A549 (cell line): ENCODE measurements at regions of chr14 and their contacts with region 1.

Region 1: DNA sequence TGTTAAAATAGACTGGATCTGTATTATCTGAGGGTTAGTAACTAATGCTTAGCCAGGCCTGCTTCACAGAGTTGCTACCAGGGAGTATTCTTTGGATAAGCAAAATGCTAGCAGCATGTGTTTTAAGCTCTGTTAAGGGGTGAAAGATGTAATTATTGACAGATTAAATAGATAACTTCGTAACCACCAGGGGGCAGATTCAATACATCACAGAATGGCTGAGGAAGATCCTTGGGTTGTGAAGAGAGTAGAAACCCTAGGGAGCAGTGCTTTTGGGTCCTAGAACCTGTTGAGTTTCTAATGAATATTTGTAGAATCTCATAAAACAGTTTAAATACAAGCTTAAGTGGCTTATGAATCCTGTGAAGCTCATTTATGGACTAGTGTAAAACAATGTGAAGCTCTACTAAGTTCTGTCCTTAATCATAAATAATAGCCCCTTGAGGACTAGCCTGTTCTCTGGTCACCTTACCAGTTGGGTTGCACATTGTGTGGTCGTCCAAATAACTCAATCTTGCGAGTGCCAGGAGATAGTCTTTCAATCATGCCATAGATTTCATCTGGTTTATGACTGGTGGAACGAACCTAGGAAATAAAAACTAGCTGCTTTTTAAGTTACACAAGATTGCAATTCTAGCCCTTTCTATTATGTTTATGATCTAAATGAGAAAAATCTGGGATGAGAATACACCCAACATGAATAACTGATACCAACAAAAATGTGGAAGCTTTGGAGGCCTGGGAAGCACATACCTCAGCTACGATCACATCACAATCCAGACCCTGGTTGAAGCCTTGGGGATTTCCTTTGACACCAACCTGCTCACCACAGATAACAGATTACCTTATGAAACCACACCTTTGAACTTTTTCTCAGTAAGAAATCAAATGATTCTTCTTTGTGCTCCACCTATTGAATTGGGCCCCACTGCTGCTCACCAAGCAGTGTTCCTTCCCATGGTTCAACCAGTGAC is 12.3 kb downstream of the METTL3 start:
- DNase-seq: peak; percentile 49 to 59
- ATAC-seq: peak; percentile 86 to 87
- H3K4me3 ChIP-seq: no peak overlapping the region
- H3K27ac ChIP-seq: no peak overlapping the region
- H3K4me1 ChIP-seq: peaks cover 8% of the 10 kb centered on the region; the same call in 2 of the 3 replicates
- CTCF ChIP-seq: peak; percentile 72
- EP300 ChIP-seq: no peak
- POLR2A ChIP-seq: no peak
- RAD21 ChIP-seq: peak; percentile 51 to 53

Region 2: DNA sequence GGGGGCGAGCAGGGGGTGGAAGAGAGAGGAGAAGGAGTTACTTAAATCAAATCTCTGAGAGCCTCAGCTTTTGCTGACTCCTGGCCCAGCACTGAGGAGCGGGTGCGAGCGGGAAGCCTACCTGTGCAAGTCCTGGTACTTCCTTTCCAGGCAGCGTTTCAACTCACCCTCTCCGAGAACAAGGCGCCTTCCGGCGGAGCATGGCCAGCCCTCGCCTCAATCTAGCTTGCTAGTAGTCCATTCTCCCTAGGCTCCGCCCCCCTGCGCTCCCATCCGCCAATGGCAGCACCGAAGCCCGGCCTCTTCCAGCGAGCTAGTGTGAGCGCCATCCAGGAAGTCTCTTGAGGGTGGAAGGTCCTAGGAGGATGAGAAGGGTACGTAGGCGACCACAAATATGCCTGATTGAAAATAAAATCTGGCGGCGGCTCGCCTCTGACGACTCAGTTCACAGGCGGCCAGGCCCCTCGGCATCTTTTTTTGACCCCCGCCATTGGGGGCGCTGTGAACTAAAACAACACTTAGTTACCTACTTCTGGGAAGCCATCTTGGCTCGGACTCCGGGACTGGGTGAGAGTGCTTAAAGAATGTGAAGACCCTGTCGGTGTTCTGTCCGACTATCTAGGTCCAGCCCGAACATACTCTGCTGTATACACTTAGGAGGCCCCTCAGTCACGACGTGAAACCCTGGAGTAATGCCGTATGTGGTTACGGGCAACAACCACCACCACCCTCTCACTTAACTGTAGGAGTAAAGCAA is 42.8 kb before region 1 on chr14 and contains the start of gene CHD8:
- CTCF ChIA-PET with region 1: interaction called, 12 read pairs
- POLR2A ChIA-PET with region 1: no interaction called
- DNase-seq: peak; percentile 99 to 100
- ATAC-seq: peak; percentile 99
- H3K4me3 ChIP-seq: peak within 1 kb of the TSS; percentile 86
- H3K27ac ChIP-seq: peak within 1 kb of the TSS; percentile 93 to 94
- H3K4me1 ChIP-seq: peaks cover 11% of the 10 kb centered on the region; the same call in 2 of the 3 replicates
- CTCF ChIP-seq: peak; percentile 80
- EP300 ChIP-seq: no peak
- POLR2A ChIP-seq: peak; percentile 89
- RAD21 ChIP-seq: peak; percentile 39 to 49; a peak in 3 of 5 replicates
- polyA plus RNA-seq, gene CHD8: 28.5 and 50.4 TPM in 2 replicates

Region 3: GRCh38 chr14:21486640-21487087 is 12.2 kb before region 1 on chr14:
- CTCF ChIA-PET with region 1: interaction called, 41 read pairs
- POLR2A ChIA-PET with region 1: interaction called, 3 read pairs
- DNase-seq: no peak
- ATAC-seq: no peak
- H3K4me3 ChIP-seq: no peak overlapping the region
- H3K27ac ChIP-seq: no peak overlapping the region
- H3K4me1 ChIP-seq: no peaks in the 10 kb centered on the region
- CTCF ChIP-seq: no peak
- EP300 ChIP-seq: no peak
- POLR2A ChIP-seq: no peak
- RAD21 ChIP-seq: no peak

Region 4: DNA sequence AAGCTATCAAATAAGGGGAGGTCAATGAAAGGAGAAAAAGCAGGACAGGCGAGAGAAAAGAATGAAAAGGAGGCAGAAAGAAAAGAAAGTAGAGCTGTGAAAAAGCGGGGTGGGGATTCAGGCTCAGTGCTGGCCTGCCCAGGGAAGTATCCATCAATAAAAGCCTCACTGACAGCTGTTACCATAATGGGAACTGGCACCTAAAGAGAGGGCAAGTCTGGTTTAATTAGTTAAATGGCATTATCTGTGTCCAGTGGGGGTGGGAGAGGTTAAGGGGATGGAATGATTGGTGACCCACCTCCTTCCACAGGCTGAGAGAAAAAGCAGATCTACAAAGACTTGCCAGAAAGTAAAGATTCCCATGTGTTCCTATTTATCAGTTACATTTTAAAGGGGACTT is 19.9 kb after region 1 on chr14:
- CTCF ChIA-PET with region 1: interaction called, 17 read pairs
- POLR2A ChIA-PET with region 1: interaction called, 3 read pairs
- DNase-seq: no peak
- ATAC-seq: no peak
- H3K4me3 ChIP-seq: no peak overlapping the region
- H3K27ac ChIP-seq: no peak overlapping the region
- H3K4me1 ChIP-seq: no peaks in the 10 kb centered on the region
- CTCF ChIP-seq: no peak
- EP300 ChIP-seq: no peak
- POLR2A ChIP-seq: no peak
- RAD21 ChIP-seq: no peak

Region 5: DNA sequence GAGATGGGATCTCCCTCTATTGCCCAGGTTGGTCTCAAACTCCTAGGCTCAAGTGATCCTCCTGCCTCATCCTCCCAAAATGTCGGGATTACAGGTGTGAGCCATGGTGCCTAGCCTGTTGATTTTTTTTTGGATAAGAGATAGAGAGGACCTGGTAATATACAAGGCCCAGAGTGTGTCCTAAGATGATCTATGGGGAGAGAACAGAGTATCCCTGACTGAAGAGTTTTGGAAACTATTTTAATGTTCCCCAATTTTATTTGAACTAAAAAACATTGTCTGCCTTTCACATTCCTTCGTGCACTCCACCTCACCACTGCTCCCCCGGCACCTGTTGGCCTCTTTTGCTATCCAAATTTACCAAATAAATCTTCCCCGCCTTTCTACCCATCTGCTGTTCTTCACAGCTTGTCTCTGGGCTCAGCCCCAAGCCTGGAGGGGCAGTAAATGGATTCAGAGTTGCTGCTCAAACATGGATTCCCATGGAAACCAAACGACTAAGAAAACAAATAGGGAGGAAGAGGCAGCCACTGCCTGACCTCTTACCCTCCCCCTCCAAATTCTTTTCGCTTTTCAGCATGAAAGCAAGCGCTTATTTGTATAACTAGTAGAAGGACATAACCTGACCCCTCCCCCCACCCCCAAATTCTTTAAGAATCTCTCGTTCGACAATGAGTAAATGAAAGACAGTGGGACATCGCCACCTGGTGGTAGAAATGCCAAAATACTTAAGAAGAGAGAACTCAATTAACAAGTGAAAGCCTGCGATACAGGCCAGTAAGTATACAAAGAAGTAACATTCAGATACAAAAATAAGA is 58.5 kb after region 1 on chr14:
- CTCF ChIA-PET with region 1: interaction called, 84 read pairs
- POLR2A ChIA-PET with region 1: interaction called, 4 read pairs
- DNase-seq: peak; percentile 68 to 92
- ATAC-seq: peak; percentile 96
- H3K4me3 ChIP-seq: peak overlapping the region; percentile 36
- H3K27ac ChIP-seq: peak overlapping the region; percentile 57 to 67
- H3K4me1 ChIP-seq: peaks cover 11% of the 10 kb centered on the region; the same call in 2 of the 3 replicates
- CTCF ChIP-seq: peak; percentile 84
- EP300 ChIP-seq: no peak
- POLR2A ChIP-seq: no peak
- RAD21 ChIP-seq: peak; percentile 87 to 90